OCI-LY7 (cell line): ENCODE measurements at regions of chr19 and their contacts with region 1.

Region 1: GRCh38 chr19:9323919-9324583 is at the start of gene ZNF559:
- DNase-seq: peak; percentile 97
- H3K4me3 ChIP-seq: peak within 1 kb of the TSS; percentile 77
- H3K27ac ChIP-seq: peak within 1 kb of the TSS; percentile 95
- H3K4me1 ChIP-seq: peaks cover 18% of the 10 kb centered on the region
- CTCF ChIP-seq: peak; percentile 68
- total RNA-seq, gene ZNF559: 9.0 and 16.8 TPM in 2 replicates

Region 2: DNA sequence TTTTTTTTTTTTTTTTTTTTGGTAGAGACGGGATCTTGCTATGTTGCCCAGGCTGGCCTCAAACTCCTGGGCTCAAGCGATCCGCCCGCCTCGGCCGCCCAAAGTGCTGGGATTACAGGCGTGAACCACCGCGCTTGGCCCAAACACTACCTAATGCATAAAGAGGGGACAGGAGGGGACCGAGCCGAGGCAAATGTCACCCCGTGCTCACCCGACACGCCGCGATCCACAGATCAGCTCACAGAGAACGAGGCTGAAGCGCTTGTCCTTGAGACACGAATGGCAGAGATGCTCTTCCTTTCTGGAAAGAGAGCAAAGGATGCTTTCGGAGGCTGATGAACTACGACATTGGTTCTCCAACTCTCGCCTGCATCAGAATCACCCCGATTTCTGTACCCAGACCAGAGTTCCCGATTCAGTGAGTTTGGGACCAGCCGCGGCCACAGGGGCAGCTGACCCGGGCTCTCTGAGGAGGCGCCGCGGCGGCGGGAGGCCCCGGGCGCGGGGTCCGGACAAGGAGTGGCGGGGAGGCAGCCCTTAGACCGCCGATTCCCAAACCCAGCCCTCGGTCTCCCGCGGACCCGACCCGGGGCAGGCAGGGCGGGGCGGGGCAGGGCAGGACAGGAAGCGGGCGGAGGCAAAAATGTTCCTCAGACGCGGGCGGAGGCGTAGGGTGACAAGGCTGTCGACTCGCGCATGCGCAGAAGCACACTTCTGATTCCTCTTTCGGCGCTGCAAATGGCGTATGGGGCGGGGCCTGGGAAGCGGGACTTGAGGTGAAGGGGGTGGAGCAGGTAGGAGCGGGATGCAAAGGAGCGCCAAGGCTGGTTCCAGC is 14.7 kb before region 1 on chr19 and contains the start of gene ZNF699:
- CTCF ChIA-PET with region 1: no interaction called
- POLR2A ChIA-PET with region 1: interaction called, 4 read pairs
- intact Hi-C with region 1: loop called (anchors 1 kb)
- DNase-seq: peak; percentile 99
- H3K4me3 ChIP-seq: peak within 1 kb of the TSS; percentile 80
- H3K27ac ChIP-seq: peak within 1 kb of the TSS; percentile 69
- H3K4me1 ChIP-seq: peaks cover 12% of the 10 kb centered on the region
- CTCF ChIP-seq: no peak
- total RNA-seq, gene ZNF699: 8.2 and 9.7 TPM in 2 replicates

Region 3: DNA sequence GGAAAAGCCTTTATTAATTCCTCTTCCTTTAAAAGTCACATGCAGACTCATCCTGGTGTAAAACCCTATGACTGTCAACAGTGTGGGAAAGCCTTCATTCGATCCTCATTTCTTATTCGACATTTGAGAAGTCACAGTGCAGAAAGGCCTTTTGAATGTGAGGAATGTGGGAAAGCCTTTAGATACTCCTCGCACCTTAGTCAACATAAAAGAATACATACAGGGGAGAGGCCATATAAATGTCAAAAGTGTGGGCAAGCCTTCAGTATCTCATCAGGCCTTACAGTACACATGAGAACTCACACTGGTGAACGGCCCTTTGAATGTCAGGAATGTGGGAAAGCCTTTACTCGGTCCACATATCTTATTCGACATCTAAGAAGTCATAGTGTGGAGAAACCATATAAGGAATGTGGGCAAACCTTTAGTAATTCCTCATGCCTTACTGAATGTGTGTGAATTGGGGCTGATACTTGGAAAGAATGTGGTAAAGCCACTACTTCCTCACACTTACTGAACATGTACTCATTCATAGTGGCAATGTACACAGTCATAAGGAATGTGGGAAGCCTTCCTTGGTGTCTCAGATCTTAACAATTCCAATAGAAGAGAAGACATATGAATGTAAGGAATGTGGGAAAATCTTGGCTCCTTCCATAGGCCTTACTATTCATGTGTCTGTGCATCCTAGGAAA is 18.7 kb after region 1 on chr19:
- CTCF ChIA-PET with region 1: no interaction called
- POLR2A ChIA-PET with region 1: no interaction called
- intact Hi-C with region 1: no loop called
- DNase-seq: no peak
- H3K4me3 ChIP-seq: no peak overlapping the region
- H3K27ac ChIP-seq: no peak overlapping the region
- H3K4me1 ChIP-seq: no peaks in the 10 kb centered on the region
- CTCF ChIP-seq: no peak

Region 4: DNA sequence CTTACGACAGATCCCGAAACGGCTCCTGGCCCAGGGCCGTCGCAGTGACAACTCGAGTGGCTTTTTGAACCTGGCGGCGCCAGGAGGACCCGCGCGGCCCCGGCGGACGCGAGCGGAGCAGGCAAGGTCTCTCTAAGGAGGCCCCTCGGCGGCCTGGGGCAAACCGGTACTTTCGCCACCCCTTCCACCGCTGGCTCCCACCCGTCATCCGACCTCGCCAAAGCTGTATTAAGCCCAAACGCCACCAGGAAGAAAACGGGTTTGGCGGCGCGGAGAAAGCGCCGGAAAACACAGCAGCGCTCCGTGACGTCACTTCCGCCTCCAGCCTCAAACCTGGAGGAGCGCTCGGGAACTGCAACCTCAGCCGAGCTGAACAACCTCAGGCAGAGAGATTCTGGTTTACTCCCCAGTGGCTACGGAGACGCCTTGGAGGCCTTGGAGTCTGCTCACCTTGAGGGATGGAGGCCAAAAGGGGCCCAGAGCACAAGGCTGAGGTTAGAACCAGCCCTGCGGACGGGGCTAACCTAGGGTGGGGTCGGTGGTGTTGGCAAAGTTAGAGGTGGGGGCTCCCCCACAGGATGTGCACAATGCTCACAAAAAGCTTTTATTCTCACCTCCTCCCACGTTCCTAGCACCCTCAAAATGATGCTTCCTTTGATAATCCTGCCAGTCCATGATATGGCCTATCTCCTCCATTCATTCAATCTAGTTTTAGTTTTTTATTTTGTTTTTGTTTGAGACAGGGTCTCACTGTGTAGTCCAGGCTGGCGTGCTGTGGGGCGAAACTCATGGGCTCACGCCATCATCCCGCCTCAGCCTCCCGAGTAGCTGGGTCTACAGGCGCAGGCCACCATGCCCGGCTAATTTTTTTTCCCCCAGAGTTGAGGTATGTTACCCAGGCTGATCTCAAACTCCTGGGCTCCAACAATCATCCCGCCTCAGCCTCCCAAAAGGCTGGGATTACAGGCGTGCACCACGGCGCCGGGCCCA is 111.5 kb after region 1 on chr19 and contains the start of gene ZNF266:
- CTCF ChIA-PET with region 1: no interaction called
- POLR2A ChIA-PET with region 1: no interaction called
- intact Hi-C with region 1: loop called (anchors 5 kb)
- DNase-seq: peak; percentile 95
- H3K4me3 ChIP-seq: peak within 1 kb of the TSS; percentile 93
- H3K27ac ChIP-seq: peak within 1 kb of the TSS; percentile 63
- H3K4me1 ChIP-seq: peaks cover 24% of the 10 kb centered on the region
- CTCF ChIP-seq: peak; percentile 59
- total RNA-seq, gene ZNF266: 22.1 and 28.2 TPM in 2 replicates

Region 5: GRCh38 chr19:9645472-9645871 is 321.4 kb after region 1 on chr19:
- CTCF ChIA-PET with region 1: no interaction called
- POLR2A ChIA-PET with region 1: no interaction called
- intact Hi-C with region 1: no loop called
- DNase-seq: peak; percentile 8
- H3K4me3 ChIP-seq: no peak overlapping the region
- H3K27ac ChIP-seq: no peak overlapping the region
- H3K4me1 ChIP-seq: no peaks in the 10 kb centered on the region
- CTCF ChIP-seq: no peak